ENCODE measurements at regions of chr3 and their contacts with region 1.

Region 1: GRCh38 chr3:134315286-134316106 is 58.8 kb downstream of the AMOTL2 start:
- DNase-seq: peak; percentile 82
- ATAC-seq: peak; percentile 39
- H3K4me3 ChIP-seq: no peak overlapping the region
- H3K27ac ChIP-seq: peak overlapping the region; percentile 98
- H3K4me1 ChIP-seq: peaks cover 41% of the 10 kb centered on the region
- H3K27me3 ChIP-seq: no peaks in the 10 kb centered on the region
- CTCF ChIP-seq: no peak
- POLR2A ChIP-seq: no peak
- RAD21 ChIP-seq: no peak

Region 2: GRCh38 chr3:134350861-134351333 is 35.4 kb after region 1 on chr3:
- CTCF ChIA-PET with region 1: no interaction called
- POLR2A ChIA-PET with region 1: interaction called, 3 read pairs
- dilution Hi-C with region 1: no loop called
- in situ Hi-C with region 1: loop called (anchors 5 kb)
- intact Hi-C with region 1: no loop called
- DNase-seq: no peak
- ATAC-seq: no peak
- H3K4me3 ChIP-seq: no peak overlapping the region
- H3K27ac ChIP-seq: no peak overlapping the region
- H3K4me1 ChIP-seq: peaks cover 14% of the 10 kb centered on the region
- H3K27me3 ChIP-seq: no peaks in the 10 kb centered on the region
- CTCF ChIP-seq: no peak
- POLR2A ChIP-seq: no peak
- RAD21 ChIP-seq: no peak

Region 3: DNA sequence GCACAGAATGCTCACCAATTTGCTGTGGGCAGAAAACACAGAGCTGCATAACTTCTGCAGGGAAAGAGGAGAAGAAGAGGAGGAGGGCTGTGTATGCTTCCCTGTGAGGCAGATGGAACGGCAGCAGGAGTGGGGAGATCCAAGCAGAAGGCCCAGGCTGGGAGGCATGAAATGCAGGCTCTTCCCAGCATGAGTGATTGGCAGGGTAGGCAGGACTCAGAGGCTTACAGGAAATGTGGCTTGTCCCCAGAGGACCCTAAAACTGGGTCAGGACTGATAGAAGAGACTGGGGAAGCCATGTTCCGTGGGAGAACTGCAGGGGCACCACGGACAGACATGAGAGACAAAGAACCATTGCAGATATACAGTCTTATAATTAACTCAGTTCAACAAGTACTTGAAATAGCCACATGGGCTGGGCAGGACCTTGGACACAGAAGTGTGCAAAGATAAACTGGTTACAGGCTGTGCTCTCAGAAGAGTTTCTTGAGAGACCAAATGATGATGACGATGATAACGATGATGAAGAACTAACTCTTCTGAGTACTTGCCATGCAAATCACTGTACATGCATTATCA is 766.4 kb after region 1 on chr3:
- CTCF ChIA-PET with region 1: no interaction called
- POLR2A ChIA-PET with region 1: no interaction called
- dilution Hi-C with region 1: no loop called
- in situ Hi-C with region 1: no loop called
- intact Hi-C with region 1: no loop called
- DNase-seq: no peak
- ATAC-seq: no peak
- H3K4me3 ChIP-seq: no peak overlapping the region
- H3K27ac ChIP-seq: no peak overlapping the region
- H3K4me1 ChIP-seq: no peaks in the 10 kb centered on the region
- H3K27me3 ChIP-seq: no peaks in the 10 kb centered on the region
- CTCF ChIP-seq: no peak
- POLR2A ChIP-seq: no peak
- RAD21 ChIP-seq: no peak

Measured in IMR-90 (cell line).